ENCODE measurements at regions of chr4 and their contacts with region 1.

Region 1: DNA sequence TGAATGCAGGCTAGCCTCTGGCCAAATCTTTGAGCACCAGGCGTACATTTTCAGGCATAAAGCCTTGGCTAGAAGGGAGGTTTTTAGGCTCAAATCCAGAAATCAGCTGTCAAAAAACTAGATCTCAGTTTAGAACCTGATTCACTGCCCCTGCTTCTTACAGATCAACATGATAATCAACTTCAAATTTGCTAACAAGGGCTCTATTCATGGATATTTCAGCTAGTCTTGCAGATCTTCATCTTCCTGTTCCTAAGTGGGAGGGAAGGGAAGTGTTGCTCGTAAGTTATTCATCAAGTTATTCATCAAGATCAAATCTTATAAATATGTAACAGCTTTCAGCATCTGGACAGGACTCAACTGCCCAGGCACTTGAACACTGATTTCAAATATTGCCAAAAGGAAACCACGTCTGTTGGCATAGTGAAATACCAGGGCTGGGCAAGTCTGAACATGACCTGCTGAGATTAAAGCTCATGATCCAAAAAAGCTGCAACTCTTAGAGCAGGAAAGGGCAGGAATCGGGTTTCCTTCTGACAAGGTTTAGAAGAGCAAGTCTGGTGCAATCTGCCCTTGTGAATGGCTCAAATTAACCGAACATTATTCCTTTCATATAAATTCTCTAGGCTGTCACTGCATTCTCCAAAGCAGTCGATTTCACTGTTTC is 200.3 kb downstream of the PDGFC start:
- DNase-seq: no peak
- ATAC-seq: peak; percentile 80 to 92 (median 88)
- H3K4me3 ChIP-seq: peak overlapping the region; percentile 50
- H3K27ac ChIP-seq: peak overlapping the region; percentile 81
- H3K4me1 ChIP-seq: peaks cover 64% of the 10 kb centered on the region
- H3K27me3 ChIP-seq: no peaks in the 10 kb centered on the region
- CTCF ChIP-seq: no peak

Region 2: GRCh38 chr4:156941940-156942548 is 170.7 kb after region 1 on chr4:
- intact Hi-C with region 1: loop called in 1 of 2 experiments (anchors 10 kb)
- DNase-seq: no peak
- ATAC-seq: peak; percentile 61 to 75 (median 66)
- H3K4me3 ChIP-seq: peak overlapping the region; percentile 46
- H3K27ac ChIP-seq: peak overlapping the region; percentile 38
- H3K4me1 ChIP-seq: peaks cover 32% of the 10 kb centered on the region
- H3K27me3 ChIP-seq: no peaks in the 10 kb centered on the region
- CTCF ChIP-seq: no peak

Region 3: DNA sequence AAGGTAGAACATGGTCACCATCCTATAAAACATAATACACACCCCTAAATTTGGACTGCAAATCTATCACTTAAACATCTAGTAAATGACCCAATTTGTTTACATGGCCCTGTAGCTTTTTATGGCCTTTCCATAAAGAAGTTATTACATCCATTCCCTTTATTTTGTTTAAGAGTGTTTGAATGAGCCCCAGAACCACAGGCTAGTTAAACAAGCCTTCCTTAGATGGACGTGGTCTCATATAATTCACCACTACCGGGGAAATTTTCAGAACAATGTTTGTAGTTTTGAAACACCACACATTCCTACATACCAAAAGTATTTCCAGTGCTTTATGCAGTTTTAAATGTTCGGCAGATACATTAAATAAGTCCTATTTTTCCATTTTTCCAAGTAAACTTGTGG is 188.0 kb after region 1 on chr4:
- intact Hi-C with region 1: loop called in 1 of 2 experiments (anchors 5 kb)
- DNase-seq: no peak
- ATAC-seq: no peak
- H3K4me3 ChIP-seq: no peak overlapping the region
- H3K27ac ChIP-seq: no peak overlapping the region
- H3K4me1 ChIP-seq: peaks cover 30% of the 10 kb centered on the region
- H3K27me3 ChIP-seq: no peaks in the 10 kb centered on the region
- CTCF ChIP-seq: no peak